ENCODE measurements at regions of chr17 and their contacts with region 1.

Region 1: GRCh38 chr17:18944646-18945045 is 7.3 kb upstream of the SLC5A10 start:
- DNase-seq: no peak
- ATAC-seq: no peak
- H3K4me3 ChIP-seq: no peak overlapping the region
- H3K4me3 Mint-ChIP-seq: no peak overlapping the region
- H3K27ac ChIP-seq: no peak overlapping the region
- H3K27ac Mint-ChIP-seq: no peak overlapping the region
- H3K4me1 ChIP-seq: no peaks in the 10 kb centered on the region
- H3K4me1 Mint-ChIP-seq: peaks cover 4 to 25% (median 6%) of the 10 kb centered on the region in 3 donors
- H3K27me3 ChIP-seq: peaks cover 0 to 15% of the 10 kb centered on the region in 2 experiments
- H3K27me3 Mint-ChIP-seq: peaks cover 0 to 3% of the 10 kb centered on the region in 2 donors

Region 2: GRCh38 chr17:18772471-18772870 is 172.2 kb before region 1 on chr17:
- CTCF ChIA-PET with region 1: no interaction called
- POLR2A ChIA-PET with region 1: no interaction called
- DNase-seq: no peak
- ATAC-seq: no peak
- H3K4me3 ChIP-seq: no peak overlapping the region
- H3K4me3 Mint-ChIP-seq: no peak overlapping the region
- H3K27ac ChIP-seq: no peak overlapping the region
- H3K27ac Mint-ChIP-seq: no peak overlapping the region
- H3K4me1 ChIP-seq: peaks cover 0 to 2% of the 10 kb centered on the region in 2 experiments
- H3K4me1 Mint-ChIP-seq: no peaks in the 10 kb centered on the region
- H3K27me3 ChIP-seq: peaks cover 0 to 3% of the 10 kb centered on the region in 2 experiments
- H3K27me3 Mint-ChIP-seq: peaks cover 0 to 17% of the 10 kb centered on the region in 2 donors

Region 3: GRCh38 chr17:18960803-18961511 is 16.3 kb after region 1 on chr17:
- CTCF ChIA-PET with region 1: interaction called in 1 of 2 experiments, 10 read pairs
- POLR2A ChIA-PET with region 1: no interaction called
- DNase-seq: peak in 31 of 35 experiments; percentile 21 to 82 (median 55)
- ATAC-seq: peak; percentile 68 to 85 (median 81)
- H3K4me3 ChIP-seq: no peak overlapping the region
- H3K4me3 Mint-ChIP-seq: no peak overlapping the region
- H3K27ac ChIP-seq: no peak overlapping the region
- H3K27ac Mint-ChIP-seq: peak overlapping the region; percentile 14 to 58
- H3K4me1 ChIP-seq: peaks cover 3 to 35% of the 10 kb centered on the region in 2 experiments
- H3K4me1 Mint-ChIP-seq: peaks cover 18 to 25% (median 23%) of the 10 kb centered on the region in 3 donors
- H3K27me3 ChIP-seq: peaks cover 0 to 4% of the 10 kb centered on the region in 2 experiments
- H3K27me3 Mint-ChIP-seq: peaks cover 0 to 3% of the 10 kb centered on the region in 2 donors